BJ (cell line): ENCODE measurements at regions of chr11 and their contacts with region 1.

Region 1: GRCh38 chr11:34331329-34331728 is 26.5 kb downstream of the ABTB2 start:
- DNase-seq: no peak
- H3K4me3 ChIP-seq: no peak overlapping the region
- H3K27me3 ChIP-seq: no peaks in the 10 kb centered on the region
- CTCF ChIP-seq: no peak

Region 2: GRCh38 chr11:34214961-34215805 is 116.1 kb before region 1 on chr11:
- CTCF ChIA-PET with region 1: no interaction called
- POLR2A ChIA-PET with region 1: no interaction called
- DNase-seq: no peak
- H3K4me3 ChIP-seq: no peak overlapping the region
- H3K27me3 ChIP-seq: no peaks in the 10 kb centered on the region; the same call in 1 of the 2 replicates
- CTCF ChIP-seq: no peak

Region 3: GRCh38 chr11:34379079-34379478 is 47.8 kb after region 1 on chr11:
- CTCF ChIA-PET with region 1: no interaction called
- POLR2A ChIA-PET with region 1: interaction called, 12 read pairs
- DNase-seq: no peak
- H3K4me3 ChIP-seq: no peak overlapping the region
- H3K27me3 ChIP-seq: 0 out of 2 replicates have a peak, but pooled peaks cover under 1% of the 10 kb centered on the region
- CTCF ChIP-seq: no peak